Activated CD4-positive, alpha-beta T cell treated with anti-CD3 and anti-CD28 coated beads for 36 hours (primary cell): ENCODE measurements at regions of chr7 and their contacts with region 1.

Region 1: GRCh38 chr7:39650676-39651075 is 27.3 kb downstream of the RALA start:
- DNase-seq: no peak
- ATAC-seq: peak; percentile 78
- H3K4me3 Mint-ChIP-seq: no peak overlapping the region
- H3K27ac Mint-ChIP-seq: no peak overlapping the region
- H3K4me1 Mint-ChIP-seq: peaks cover 34% of the 10 kb centered on the region
- H3K27me3 Mint-ChIP-seq: no peaks in the 10 kb centered on the region

Region 2: GRCh38 chr7:39754326-39755120 is 103.8 kb after region 1 on chr7:
- CTCF ChIA-PET with region 1: no interaction called
- POLR2A ChIA-PET with region 1: interaction called, 12 read pairs
- intact Hi-C with region 1: no loop called
- DNase-seq: no peak
- ATAC-seq: peak; percentile 81
- H3K4me3 Mint-ChIP-seq: no peak overlapping the region
- H3K27ac Mint-ChIP-seq: peak overlapping the region; percentile 77
- H3K4me1 Mint-ChIP-seq: peaks cover 11% of the 10 kb centered on the region
- H3K27me3 Mint-ChIP-seq: no peaks in the 10 kb centered on the region